Activated B cell treated with CpG ODN at 0.5 μM for 24 hours (primary cell): ENCODE measurements at regions of chr12 and their contacts with region 1.

Region 1: DNA sequence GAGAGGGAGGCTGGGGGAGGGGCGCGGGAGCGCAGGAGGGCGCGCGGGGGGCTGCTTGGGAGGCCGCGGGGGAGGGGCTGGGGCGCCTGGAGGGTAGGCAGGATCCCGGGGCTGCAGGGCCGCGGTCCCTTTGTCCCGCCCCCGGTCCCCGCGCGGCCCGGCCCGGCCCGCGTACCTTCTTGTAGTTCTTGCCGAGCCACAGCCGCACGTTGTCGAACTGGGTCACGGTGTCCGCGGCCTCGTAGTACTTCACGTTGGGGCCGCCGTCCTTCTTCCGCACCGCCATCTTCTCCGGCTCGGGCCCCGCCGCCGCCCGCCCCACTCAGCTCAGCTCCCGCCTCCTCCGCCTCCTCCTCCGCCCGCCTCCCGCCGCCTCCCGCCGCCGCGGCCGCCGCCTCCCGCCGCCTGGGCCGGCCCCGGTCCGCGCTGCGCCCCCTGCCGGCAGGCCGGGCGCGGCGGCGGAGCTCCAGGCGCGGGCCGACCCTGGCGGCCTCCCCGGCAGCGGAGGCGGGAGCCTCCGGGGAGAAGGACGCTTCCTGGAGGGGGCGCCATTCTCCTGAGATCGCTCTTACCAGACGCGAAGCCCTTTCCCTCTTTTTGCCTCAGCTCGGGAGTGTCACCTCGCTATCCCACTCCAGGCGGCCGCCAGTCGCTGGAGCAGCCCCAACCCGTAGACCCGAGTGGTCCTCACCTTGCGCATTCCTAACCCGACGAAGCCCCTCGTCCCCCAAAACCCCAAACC is at the start of gene SMARCC2:
- DNase-seq: peak; percentile 82
- ATAC-seq: peak; percentile 81
- H3K4me3 Mint-ChIP-seq: peak within 1 kb of the TSS; percentile 95
- H3K27ac Mint-ChIP-seq: peak within 1 kb of the TSS; percentile 96
- H3K4me1 Mint-ChIP-seq: peaks cover 43% of the 10 kb centered on the region
- H3K27me3 Mint-ChIP-seq: no peaks in the 10 kb centered on the region
- CTCF ChIP-seq: no peak
- total RNA-seq, gene SMARCC2: 109 and 136 TPM in 2 replicates

Region 2: DNA sequence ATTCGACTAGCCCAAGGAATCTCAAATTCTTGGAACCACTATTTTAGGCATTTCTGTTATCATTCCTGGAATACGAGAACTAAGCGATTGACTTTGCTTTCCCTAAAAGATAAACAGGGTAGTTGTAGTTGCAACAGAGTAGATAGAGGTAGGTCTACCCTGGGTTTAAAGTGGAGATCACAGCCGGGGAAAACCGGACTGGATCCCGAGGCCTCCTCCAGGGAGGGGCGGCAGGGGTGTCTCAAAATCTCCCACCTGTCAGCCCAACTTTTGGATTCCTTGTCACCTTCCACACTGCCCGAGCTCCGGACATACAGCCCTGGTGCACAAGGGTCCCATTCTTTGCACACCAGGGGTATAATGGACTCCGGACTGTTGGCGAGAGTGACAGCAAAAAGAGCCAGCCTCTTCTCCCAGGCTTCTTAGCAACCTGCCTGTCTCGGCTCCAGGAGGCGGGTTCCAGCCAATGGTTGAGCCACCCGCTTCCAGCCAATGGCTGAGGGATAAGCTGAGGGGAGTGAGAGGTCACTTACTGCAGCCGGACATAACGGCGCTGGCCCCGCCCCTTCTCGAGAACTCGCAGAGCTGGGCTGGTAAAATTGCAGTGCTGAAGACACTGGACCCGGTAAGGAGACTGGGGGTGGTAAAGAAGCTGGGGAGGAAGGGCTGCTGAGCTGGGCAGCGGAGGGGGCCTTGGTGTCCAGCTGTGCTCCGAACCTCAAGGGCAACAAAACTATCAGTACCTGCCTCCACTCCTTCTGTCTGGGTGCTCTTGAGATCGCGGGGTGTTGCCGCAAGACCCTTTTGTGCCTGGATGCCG is 192.4 kb before region 1 on chr12 and contains the start of gene SUOX:
- CTCF ChIA-PET with region 1: interaction called, 3 read pairs
- POLR2A ChIA-PET with region 1: interaction called, 4 read pairs
- intact Hi-C with region 1: loop called (anchors 1 kb)
- DNase-seq: no peak
- ATAC-seq: peak; percentile 75
- H3K4me3 Mint-ChIP-seq: peak within 1 kb of the TSS; percentile 78
- H3K27ac Mint-ChIP-seq: peak within 1 kb of the TSS; percentile 18
- H3K4me1 Mint-ChIP-seq: peaks cover 21% of the 10 kb centered on the region
- H3K27me3 Mint-ChIP-seq: no peaks in the 10 kb centered on the region
- CTCF ChIP-seq: no peak
- total RNA-seq, gene SUOX: 5.4 and 5.6 TPM in 2 replicates

Region 3: GRCh38 chr12:56152318-56153033 is 36.9 kb before region 1 on chr12 and contains the start of gene MYL6B:
- CTCF ChIA-PET with region 1: interaction called, 5 read pairs
- POLR2A ChIA-PET with region 1: interaction called, 21 read pairs
- intact Hi-C with region 1: no loop called
- DNase-seq: peak; percentile 87
- ATAC-seq: peak; percentile 89
- H3K4me3 Mint-ChIP-seq: peak within 1 kb of the TSS; percentile 93
- H3K27ac Mint-ChIP-seq: peak within 1 kb of the TSS; percentile 99
- H3K4me1 Mint-ChIP-seq: peaks cover 40% of the 10 kb centered on the region
- H3K27me3 Mint-ChIP-seq: no peaks in the 10 kb centered on the region
- CTCF ChIP-seq: no peak
- total RNA-seq, gene MYL6B: 25.2 and 36.2 TPM in 2 replicates

Region 4: DNA sequence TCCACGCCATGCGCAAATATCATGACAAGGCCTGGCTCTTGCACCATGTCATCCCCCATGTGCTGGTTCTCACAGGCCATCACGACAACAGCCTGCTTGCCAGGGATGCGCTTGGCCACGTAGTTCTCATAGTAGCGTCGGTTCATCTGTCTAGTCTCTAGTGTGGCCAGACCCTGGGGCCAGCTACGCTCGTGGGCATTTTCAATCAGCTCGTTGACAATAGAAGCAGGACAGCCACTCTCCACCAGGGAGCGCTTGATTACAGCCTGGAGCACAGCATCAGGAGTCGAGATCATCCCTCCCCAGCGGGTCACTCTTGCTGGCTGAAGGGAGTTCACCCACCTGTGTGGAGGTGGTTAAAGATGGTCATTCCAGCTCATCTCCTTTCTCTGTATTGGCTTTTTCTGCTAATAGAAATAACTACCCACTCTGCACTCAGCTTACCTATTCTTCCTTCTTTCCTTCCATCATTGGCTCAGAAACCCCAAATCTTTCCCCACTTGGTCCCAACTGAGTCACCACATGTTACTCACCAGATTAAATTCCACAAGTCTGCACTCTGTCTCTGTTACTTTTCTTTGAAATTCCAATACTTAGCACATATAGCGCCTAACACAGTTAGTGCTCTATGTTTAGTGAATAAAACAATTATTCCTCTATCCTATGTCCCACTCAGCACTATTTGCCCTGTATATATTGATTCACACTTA is 17.3 kb after region 1 on chr12:
- CTCF ChIA-PET with region 1: interaction called, 36 read pairs
- POLR2A ChIA-PET with region 1: interaction called, 7 read pairs
- intact Hi-C with region 1: loop called (anchors 1 kb)
- DNase-seq: no peak
- ATAC-seq: peak; percentile 47
- H3K4me3 Mint-ChIP-seq: no peak overlapping the region
- H3K27ac Mint-ChIP-seq: peak overlapping the region; percentile 80
- H3K4me1 Mint-ChIP-seq: peaks cover 39% of the 10 kb centered on the region
- H3K27me3 Mint-ChIP-seq: no peaks in the 10 kb centered on the region
- CTCF ChIP-seq: no peak

Region 5: DNA sequence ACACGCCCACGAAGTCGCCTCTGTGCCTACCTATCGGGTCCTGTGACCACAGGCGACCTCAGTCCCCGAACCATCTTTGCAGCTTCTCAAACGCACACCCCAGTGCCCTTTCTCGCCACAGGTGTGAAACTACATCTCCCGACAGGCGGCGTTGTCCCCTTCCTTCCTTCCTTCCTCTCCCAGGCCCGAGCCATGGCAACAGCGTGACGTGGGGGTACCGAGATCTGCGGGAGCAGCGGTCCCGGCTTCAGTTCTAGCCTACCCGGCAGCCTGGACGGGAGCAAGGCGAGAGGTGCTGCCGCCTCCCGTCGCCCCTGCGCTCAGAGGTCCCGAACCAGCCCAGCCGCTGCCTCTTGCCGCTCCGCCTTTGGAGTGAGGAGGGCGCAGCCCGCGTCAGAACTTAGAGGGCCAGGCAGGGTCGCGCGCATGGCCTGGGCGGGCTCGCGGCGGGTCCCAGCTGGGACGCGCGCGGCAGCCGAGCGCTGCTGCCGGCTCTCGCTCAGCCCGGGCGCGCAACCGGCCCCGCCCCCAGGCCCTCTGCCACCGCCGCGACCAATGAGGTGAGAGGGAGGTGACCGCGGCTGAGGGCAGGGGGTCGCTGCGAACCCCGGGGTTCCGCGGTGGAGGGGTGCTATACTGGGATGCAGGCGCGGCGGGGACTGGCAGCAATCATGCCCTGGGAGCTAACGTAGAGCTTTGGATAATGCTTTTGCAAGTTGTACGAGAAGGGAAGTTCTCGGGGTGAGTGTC is 77.5 kb after region 1 on chr12 and contains the start of gene COQ10A:
- CTCF ChIA-PET with region 1: interaction called, 5 read pairs
- POLR2A ChIA-PET with region 1: interaction called, 8 read pairs
- intact Hi-C with region 1: loop called (anchors 1 kb)
- DNase-seq: peak; percentile 90
- ATAC-seq: peak; percentile 90
- H3K4me3 Mint-ChIP-seq: peak within 1 kb of the TSS; percentile 93
- H3K27ac Mint-ChIP-seq: peak within 1 kb of the TSS; percentile 93
- H3K4me1 Mint-ChIP-seq: peaks cover 18% of the 10 kb centered on the region
- H3K27me3 Mint-ChIP-seq: no peaks in the 10 kb centered on the region
- CTCF ChIP-seq: no peak
- total RNA-seq, gene COQ10A: 30.2 and 35.6 TPM in 2 replicates

Region 6: GRCh38 chr12:56468216-56469006 is 279.1 kb after region 1 on chr12 and contains the start of gene SPRYD4:
- CTCF ChIA-PET with region 1: interaction called, 9 read pairs
- POLR2A ChIA-PET with region 1: interaction called, 10 read pairs
- intact Hi-C with region 1: loop called (anchors 1 kb)
- DNase-seq: peak; percentile 92
- ATAC-seq: peak; percentile 90
- H3K4me3 Mint-ChIP-seq: peak within 1 kb of the TSS; percentile 94
- H3K27ac Mint-ChIP-seq: peak within 1 kb of the TSS; percentile 94
- H3K4me1 Mint-ChIP-seq: peaks cover 36% of the 10 kb centered on the region
- H3K27me3 Mint-ChIP-seq: no peaks in the 10 kb centered on the region
- CTCF ChIP-seq: no peak
- total RNA-seq, gene SPRYD4: 5.8 and 7.5 TPM in 2 replicates